Endothelial cell of umbilical vein (primary cell): ENCODE measurements at regions of chr6 and their contacts with region 1.

Region 1: GRCh38 chr6:159633196-159633595 is 59.8 kb downstream of the SOD2 start:
- DNase-seq: peak; percentile 30
- H3K4me3 ChIP-seq: no peak overlapping the region
- H3K27ac ChIP-seq: no peak overlapping the region
- H3K4me1 ChIP-seq: no peaks in the 10 kb centered on the region
- H3K27me3 ChIP-seq: no peaks in the 10 kb centered on the region
- CTCF ChIP-seq: peak; percentile 30 to 34
- POLR2A ChIP-seq: no peak

Region 2: DNA sequence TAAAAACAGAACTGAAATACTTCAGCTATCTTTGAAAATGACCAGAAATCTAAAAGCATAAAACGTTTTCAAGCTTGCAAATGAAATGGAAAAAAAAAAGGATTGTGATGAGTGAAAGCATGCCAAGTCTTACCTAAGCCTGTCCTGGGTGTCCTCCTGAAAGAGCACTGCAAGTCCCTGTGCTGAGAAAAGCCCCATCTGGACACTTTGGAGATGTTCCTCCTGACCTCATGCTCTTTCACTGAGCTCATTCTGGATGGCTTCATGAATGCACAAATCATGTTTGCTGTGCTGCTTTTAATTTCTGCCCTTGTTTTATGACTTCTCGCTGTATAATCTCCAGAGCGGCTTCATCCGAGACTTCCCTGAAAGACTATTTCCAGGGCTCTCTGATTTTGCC is 76.2 kb before region 1 on chr6:
- CTCF ChIA-PET with region 1: no interaction called
- POLR2A ChIA-PET with region 1: no interaction called
- dilution Hi-C with region 1: no loop called
- intact Hi-C with region 1: no loop called
- DNase-seq: no peak
- H3K4me3 ChIP-seq: no peak overlapping the region
- H3K27ac ChIP-seq: no peak overlapping the region
- H3K4me1 ChIP-seq: no peaks in the 10 kb centered on the region
- H3K27me3 ChIP-seq: no peaks in the 10 kb centered on the region
- CTCF ChIP-seq: no peak
- POLR2A ChIP-seq: no peak

Region 3: GRCh38 chr6:159623156-159623555 is 10.0 kb before region 1 on chr6:
- CTCF ChIA-PET with region 1: interaction called, 24 read pairs
- POLR2A ChIA-PET with region 1: no interaction called
- dilution Hi-C with region 1: no loop called
- intact Hi-C with region 1: no loop called
- DNase-seq: no peak
- H3K4me3 ChIP-seq: no peak overlapping the region
- H3K27ac ChIP-seq: no peak overlapping the region
- H3K4me1 ChIP-seq: no peaks in the 10 kb centered on the region
- H3K27me3 ChIP-seq: no peaks in the 10 kb centered on the region
- CTCF ChIP-seq: no peak
- POLR2A ChIP-seq: no peak

Region 4: DNA sequence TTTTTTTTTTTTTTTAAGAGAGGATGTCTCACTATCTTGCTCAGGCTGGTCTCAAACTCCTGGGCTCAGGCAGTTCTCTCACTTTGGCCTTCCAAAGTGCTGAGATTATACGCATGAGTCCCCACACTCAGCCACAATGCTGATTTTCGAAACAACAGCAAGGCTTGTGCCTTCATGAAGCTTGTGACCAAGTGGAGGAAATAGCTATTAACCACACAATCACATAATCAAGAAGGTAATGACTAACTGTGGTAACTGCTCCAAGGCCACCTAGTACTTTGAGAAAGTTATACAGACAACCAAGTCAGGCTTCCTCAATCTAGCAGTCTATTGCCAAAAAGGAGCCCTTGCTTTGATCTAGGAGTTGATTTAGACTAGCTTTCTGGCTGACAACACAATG is 13.5 kb after region 1 on chr6:
- CTCF ChIA-PET with region 1: interaction called, 10 read pairs
- POLR2A ChIA-PET with region 1: no interaction called
- dilution Hi-C with region 1: no loop called
- intact Hi-C with region 1: no loop called
- DNase-seq: no peak
- H3K4me3 ChIP-seq: no peak overlapping the region
- H3K27ac ChIP-seq: no peak overlapping the region
- H3K4me1 ChIP-seq: no peaks in the 10 kb centered on the region
- H3K27me3 ChIP-seq: no peaks in the 10 kb centered on the region
- CTCF ChIP-seq: no peak
- POLR2A ChIP-seq: no peak